Pancreas (tissue), 10 donors: ENCODE measurements at regions of chr16 and their contacts with region 1.

Region 1: DNA sequence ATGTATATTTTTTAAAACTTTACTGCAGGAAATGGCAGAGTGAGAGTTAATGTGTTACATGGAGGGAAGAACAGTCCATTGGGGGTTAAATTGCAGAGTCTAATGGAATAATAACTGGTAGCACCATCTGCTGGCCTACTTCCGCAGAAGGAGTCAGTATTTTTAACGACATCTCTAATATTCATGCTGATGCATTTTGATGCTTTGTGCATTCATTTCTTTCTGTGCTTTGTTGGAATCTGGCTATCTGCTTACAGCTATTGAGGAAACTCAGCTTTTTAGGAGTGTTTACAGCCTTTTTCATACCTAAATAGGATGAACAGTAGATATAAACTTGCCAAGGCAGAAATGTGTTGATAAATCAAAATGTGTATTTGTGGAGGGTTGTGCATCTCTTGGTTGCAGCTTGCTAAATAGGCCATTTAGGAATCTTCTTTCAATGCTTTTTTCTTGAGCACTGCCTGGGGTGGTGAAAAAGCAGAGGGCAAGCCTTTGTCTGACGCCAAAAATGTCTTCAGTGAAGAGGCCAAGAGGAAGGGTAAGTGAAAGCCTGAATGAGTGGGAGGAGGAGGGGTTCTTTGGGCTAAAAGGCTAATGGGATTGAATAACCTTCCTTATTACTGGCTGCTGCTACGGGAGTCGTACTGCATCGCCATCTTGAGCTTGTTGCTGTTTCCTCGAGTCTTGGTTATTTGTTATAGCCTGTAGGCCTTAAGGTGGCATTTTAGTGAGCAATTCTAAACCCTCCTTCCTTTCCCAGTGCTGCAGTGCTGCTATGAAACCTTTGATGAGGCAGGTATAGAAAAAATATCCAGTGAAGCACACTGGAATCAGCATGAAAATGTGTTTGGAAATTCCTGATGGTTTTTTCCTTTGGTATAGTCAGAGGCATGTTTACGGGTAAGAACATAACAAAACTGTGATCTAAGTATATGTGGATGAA is 153.3 kb downstream of the CHD9 start:
- DNase-seq: peak in 2 of 6 donors; percentile 25 to 29
- ATAC-seq: peak; percentile 81 to 93 (median 90)
- H3K4me3 ChIP-seq: peak overlapping the region in 2 of 4 donors; percentile 26 to 27
- H3K27ac ChIP-seq: peak overlapping the region in 3 of 4 donors; percentile 35 to 78 (median 75)
- H3K4me1 ChIP-seq: peaks cover 0 to 25% (median 0%) of the 10 kb centered on the region in 3 donors
- H3K27me3 ChIP-seq: no peaks in the 10 kb centered on the region
- CTCF ChIP-seq: peak in 2 of 4 donors; percentile 20 to 23

Region 2: GRCh38 chr16:52805556-52806168 is 402.4 kb before region 1 on chr16:
- intact Hi-C with region 1: no loop called
- DNase-seq: no peak
- ATAC-seq: no peak
- H3K4me3 ChIP-seq: no peak overlapping the region
- H3K27ac ChIP-seq: no peak overlapping the region
- H3K4me1 ChIP-seq: no peaks in the 10 kb centered on the region
- H3K27me3 ChIP-seq: no peaks in the 10 kb centered on the region
- CTCF ChIP-seq: no peak

Region 3: GRCh38 chr16:53130159-53131049 is 77.7 kb before region 1 on chr16:
- intact Hi-C with region 1: loop called in 1 of 3 experiments (anchors 10 kb)
- DNase-seq: peak; percentile 95 to 98 (median 97)
- ATAC-seq: peak; percentile 87 to 94 (median 88)
- H3K4me3 ChIP-seq: peak overlapping the region; percentile 52 to 82 (median 70)
- H3K27ac ChIP-seq: peak overlapping the region; percentile 91 to 97 (median 94)
- H3K4me1 ChIP-seq: peaks cover 0 to 14% (median 13%) of the 10 kb centered on the region in 3 donors
- H3K27me3 ChIP-seq: no peaks in the 10 kb centered on the region
- CTCF ChIP-seq: peak; percentile 41 to 60 (median 49)